CD8-positive, alpha-beta memory T cell (primary cell): ENCODE measurements at regions of chr1 and their contacts with region 1.

Region 1: GRCh38 chr1:161165742-161166668 is at the start of gene PPOX:
- DNase-seq: peak; percentile 88 to 97 (median 93)
- H3K4me3 ChIP-seq: peak within 1 kb of the TSS; percentile 81
- H3K4me3 Mint-ChIP-seq: peak within 1 kb of the TSS; percentile 87 to 96 (median 93)
- H3K27ac ChIP-seq: peak within 1 kb of the TSS; percentile 95
- H3K27ac Mint-ChIP-seq: peak within 1 kb of the TSS; percentile 96 to 100 (median 99)
- H3K4me1 ChIP-seq: peaks cover 27% of the 10 kb centered on the region
- H3K4me1 Mint-ChIP-seq: peaks cover 43 to 76% (median 66%) of the 10 kb centered on the region in 3 donors
- H3K27me3 ChIP-seq: no peaks in the 10 kb centered on the region
- H3K27me3 Mint-ChIP-seq: no peaks in the 10 kb centered on the region
- total RNA-seq, gene PPOX: 24.4 to 31.3 TPM

Region 2: GRCh38 chr1:161139765-161140164 is 26.2 kb before region 1 on chr1:
- CTCF ChIA-PET with region 1: interaction called, 10 read pairs
- POLR2A ChIA-PET with region 1: no interaction called
- DNase-seq: peak in 2 of 5 donors; percentile 18 to 48
- H3K4me3 ChIP-seq: no peak overlapping the region
- H3K4me3 Mint-ChIP-seq: no peak overlapping the region
- H3K27ac ChIP-seq: no peak overlapping the region
- H3K27ac Mint-ChIP-seq: no peak overlapping the region
- H3K4me1 ChIP-seq: no peaks in the 10 kb centered on the region
- H3K4me1 Mint-ChIP-seq: peaks cover 4 to 8% (median 6%) of the 10 kb centered on the region in 3 donors
- H3K27me3 ChIP-seq: no peaks in the 10 kb centered on the region
- H3K27me3 Mint-ChIP-seq: no peaks in the 10 kb centered on the region

Region 3: GRCh38 chr1:161177112-161177935 is 11.3 kb after region 1 on chr1 and contains the start of gene B4GALT3:
- CTCF ChIA-PET with region 1: interaction called, 49 read pairs
- POLR2A ChIA-PET with region 1: interaction called, 15 read pairs
- DNase-seq: peak; percentile 88 to 94 (median 92)
- H3K4me3 ChIP-seq: peak within 1 kb of the TSS; percentile 98
- H3K4me3 Mint-ChIP-seq: peak within 1 kb of the TSS; percentile 95 to 100 (median 100)
- H3K27ac ChIP-seq: peak within 1 kb of the TSS; percentile 89
- H3K27ac Mint-ChIP-seq: peak within 1 kb of the TSS; percentile 93 to 100 (median 99)
- H3K4me1 ChIP-seq: peaks cover 47% of the 10 kb centered on the region
- H3K4me1 Mint-ChIP-seq: peaks cover 68 to 87% (median 85%) of the 10 kb centered on the region in 3 donors
- H3K27me3 ChIP-seq: no peaks in the 10 kb centered on the region
- H3K27me3 Mint-ChIP-seq: peaks cover 0 to 5% of the 10 kb centered on the region in 2 donors
- total RNA-seq, gene B4GALT3: 59.4 to 60.9 TPM

Region 4: GRCh38 chr1:161192476-161193465 is 26.8 kb after region 1 on chr1:
- CTCF ChIA-PET with region 1: interaction called, 42 read pairs
- POLR2A ChIA-PET with region 1: interaction called, 4 read pairs
- DNase-seq: peak; percentile 43 to 76 (median 63)
- H3K4me3 ChIP-seq: no peak overlapping the region
- H3K4me3 Mint-ChIP-seq: peak overlapping the region in 5 of 7 donors; percentile 13 to 86 (median 61)
- H3K27ac ChIP-seq: no peak overlapping the region
- H3K27ac Mint-ChIP-seq: peak overlapping the region; percentile 67 to 99 (median 90)
- H3K4me1 ChIP-seq: peaks cover 48% of the 10 kb centered on the region
- H3K4me1 Mint-ChIP-seq: peaks cover 40 to 61% (median 45%) of the 10 kb centered on the region in 3 donors
- H3K27me3 ChIP-seq: no peaks in the 10 kb centered on the region
- H3K27me3 Mint-ChIP-seq: peaks cover 0 to 3% of the 10 kb centered on the region in 2 donors

Region 5: GRCh38 chr1:161238039-161238473 is 72.1 kb after region 1 on chr1 and contains the start of gene NR1I3:
- CTCF ChIA-PET with region 1: no interaction called
- POLR2A ChIA-PET with region 1: no interaction called
- DNase-seq: no peak
- H3K4me3 ChIP-seq: no peak within 1 kb of the TSS
- H3K4me3 Mint-ChIP-seq: no peak within 1 kb of the TSS
- H3K27ac ChIP-seq: no peak within 1 kb of the TSS
- H3K27ac Mint-ChIP-seq: peak within 1 kb of the TSS in 1 of 8 donors; percentile 82
- H3K4me1 ChIP-seq: no peaks in the 10 kb centered on the region
- H3K4me1 Mint-ChIP-seq: no peaks in the 10 kb centered on the region
- H3K27me3 ChIP-seq: no peaks in the 10 kb centered on the region
- H3K27me3 Mint-ChIP-seq: peaks cover 7 to 23% of the 10 kb centered on the region in 2 donors
- total RNA-seq, gene NR1I3: not detected

Region 6: DNA sequence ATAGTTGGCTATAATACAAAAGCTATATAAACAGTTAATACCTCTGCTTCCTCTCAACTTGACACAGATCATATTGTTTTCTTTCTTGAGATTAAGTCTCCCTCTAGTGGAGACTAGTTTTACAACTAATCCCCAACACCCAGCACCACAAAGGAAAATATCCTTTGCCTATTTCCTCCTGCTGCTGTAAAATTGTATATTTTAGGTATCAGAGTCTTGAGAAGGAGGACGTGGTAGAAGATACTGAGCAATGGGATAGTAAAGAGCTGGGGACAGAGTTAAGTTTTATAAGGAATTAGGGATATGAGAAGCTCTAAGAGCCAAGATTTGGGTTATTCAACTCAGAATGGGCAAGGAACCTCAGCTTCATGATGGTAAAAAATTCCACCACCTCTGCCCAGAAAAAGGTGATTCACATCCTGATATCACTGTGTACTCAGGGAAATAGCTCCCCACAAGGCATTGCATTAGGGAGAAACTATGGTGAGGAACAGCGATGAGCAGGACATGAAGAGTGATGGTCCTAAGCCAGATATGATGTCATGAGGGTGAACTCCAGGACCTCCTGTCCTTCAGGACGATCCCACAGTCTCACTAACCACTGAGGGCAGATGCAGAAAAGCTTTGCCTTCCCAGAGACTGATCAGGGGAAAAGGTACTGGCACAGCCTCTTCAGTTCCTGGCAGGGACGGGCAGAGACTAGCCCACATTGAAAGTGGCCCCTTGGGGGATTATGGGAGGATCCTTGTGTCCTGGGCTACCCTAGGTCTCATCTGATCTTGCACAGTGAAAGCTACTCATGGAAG is 216.4 kb after region 1 on chr1:
- CTCF ChIA-PET with region 1: interaction called, 12 read pairs
- POLR2A ChIA-PET with region 1: no interaction called
- DNase-seq: peak in 2 of 5 donors; percentile 37 to 48
- H3K4me3 ChIP-seq: no peak overlapping the region
- H3K4me3 Mint-ChIP-seq: no peak overlapping the region
- H3K27ac ChIP-seq: no peak overlapping the region
- H3K27ac Mint-ChIP-seq: peak overlapping the region in 2 of 8 donors; percentile 0 to 62
- H3K4me1 ChIP-seq: no peaks in the 10 kb centered on the region
- H3K4me1 Mint-ChIP-seq: peaks cover 4 to 12% (median 8%) of the 10 kb centered on the region in 3 donors
- H3K27me3 ChIP-seq: no peaks in the 10 kb centered on the region
- H3K27me3 Mint-ChIP-seq: peaks cover 0 to 2% of the 10 kb centered on the region in 2 donors